ENCODE measurements at regions of chr14 and their contacts with region 1.

Region 1: DNA sequence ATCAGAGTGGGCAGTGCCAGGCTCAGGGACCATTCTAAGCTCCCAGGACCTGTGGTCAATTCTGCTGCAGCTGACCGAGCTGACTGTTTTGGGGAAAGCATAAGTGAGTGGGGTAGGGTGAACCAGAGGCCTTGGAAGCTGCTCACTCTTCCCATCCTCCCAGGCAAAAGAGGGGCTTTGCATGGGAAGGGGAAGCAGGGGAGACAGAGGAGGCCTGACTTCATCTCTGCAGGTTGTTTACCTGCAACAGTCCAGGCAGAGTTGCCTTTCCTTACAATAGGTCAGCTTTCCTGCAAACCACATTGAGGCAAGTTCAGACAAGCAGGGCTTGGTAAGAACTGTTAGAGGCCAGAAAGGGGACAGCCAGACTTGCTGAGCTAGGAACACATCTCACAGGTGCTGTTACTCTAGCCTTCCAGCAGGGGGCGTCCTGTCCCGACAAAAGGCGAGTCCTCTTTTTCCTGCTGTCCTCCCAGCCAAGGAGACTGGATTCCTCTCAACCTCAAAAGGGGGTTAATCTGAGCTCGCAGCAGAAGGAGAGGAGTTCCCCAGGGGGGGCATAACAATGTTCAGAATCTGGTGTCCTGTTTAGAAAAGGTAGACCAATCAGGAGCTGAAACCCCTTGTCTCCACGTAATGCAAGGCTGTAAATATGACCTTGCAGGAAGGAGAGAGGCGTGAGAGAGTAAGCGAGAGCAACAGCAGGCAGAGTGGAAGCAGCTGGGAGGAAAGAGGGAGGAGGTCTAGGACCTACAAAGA is 4.3 kb upstream of the DHRS2 start:
- DNase-seq: peak; percentile 74 to 85
- ATAC-seq: peak; percentile 77 to 92 (median 91)
- H3K4me3 ChIP-seq: no peak overlapping the region
- H3K4me3 Mint-ChIP-seq: peak overlapping the region; percentile 79
- H3K27ac ChIP-seq: no peak overlapping the region
- H3K27ac Mint-ChIP-seq: peak overlapping the region; percentile 3 to 34
- H3K4me1 ChIP-seq: peaks cover 6% of the 10 kb centered on the region
- H3K4me1 Mint-ChIP-seq: peaks cover 7 to 13% of the 10 kb centered on the region in 2 donors
- H3K27me3 ChIP-seq: no peaks in the 10 kb centered on the region
- H3K27me3 Mint-ChIP-seq: peaks cover 0 to 5% of the 10 kb centered on the region in 2 donors
- CTCF ChIP-seq: peak; percentile 96

Region 2: GRCh38 chr14:23929822-23930294 is 298.0 kb after region 1 on chr14:
- intact Hi-C with region 1: loop called (anchors 1 kb)
- DNase-seq: peak; percentile 75 to 91
- ATAC-seq: peak; percentile 87 to 100 (median 97)
- H3K4me3 ChIP-seq: no peak overlapping the region
- H3K4me3 Mint-ChIP-seq: no peak overlapping the region
- H3K27ac ChIP-seq: no peak overlapping the region
- H3K27ac Mint-ChIP-seq: no peak overlapping the region
- H3K4me1 ChIP-seq: no peaks in the 10 kb centered on the region
- H3K4me1 Mint-ChIP-seq: no peaks in the 10 kb centered on the region
- H3K27me3 ChIP-seq: no peaks in the 10 kb centered on the region
- H3K27me3 Mint-ChIP-seq: peaks cover 0 to 3% of the 10 kb centered on the region in 2 donors
- CTCF ChIP-seq: peak; percentile 95

Region 3: DNA sequence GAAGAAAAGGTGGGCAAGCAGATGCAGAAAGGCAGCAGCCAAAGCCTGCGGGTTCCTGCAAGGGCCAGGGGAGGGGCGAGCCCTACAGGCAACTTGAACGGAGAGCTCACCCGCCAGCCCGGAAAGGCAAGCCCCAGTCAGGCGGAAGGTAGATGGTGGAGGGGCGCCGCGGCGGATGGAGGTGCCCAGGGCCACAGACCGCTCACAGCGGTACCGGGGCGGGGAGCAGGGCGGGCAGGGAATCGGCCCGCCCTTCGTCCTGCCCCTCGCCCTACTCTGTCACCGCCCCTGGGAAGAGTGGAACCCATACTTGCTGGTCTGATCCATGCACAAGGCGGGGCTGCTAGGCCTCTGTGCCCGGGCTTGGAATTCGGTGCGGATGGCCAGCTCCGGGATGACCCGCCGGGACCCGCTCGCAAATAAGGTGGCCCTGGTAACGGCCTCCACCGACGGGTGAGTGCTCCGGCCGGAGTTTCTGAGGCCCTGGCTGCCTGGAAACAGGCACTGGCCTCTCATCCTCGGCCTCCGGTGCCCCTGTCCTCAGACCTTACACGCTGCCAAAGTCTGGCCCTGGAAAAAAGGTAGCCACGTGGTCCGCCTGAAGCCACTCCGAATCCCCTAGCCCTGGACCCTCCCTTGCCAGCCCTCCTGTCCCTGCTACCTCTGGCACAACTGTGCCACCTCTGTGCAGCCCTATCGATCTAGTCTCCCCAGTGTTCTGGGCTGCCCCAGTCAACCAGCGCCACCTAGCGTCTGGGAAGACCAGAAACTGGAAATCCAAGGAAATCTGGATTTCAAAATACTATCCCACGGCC is 321.8 kb after region 1 on chr14 and contains the start of gene DHRS4:
- intact Hi-C with region 1: loop called (anchors 1 kb)
- DNase-seq: peak; percentile 67 to 91
- ATAC-seq: peak; percentile 88 to 94 (median 89)
- H3K4me3 ChIP-seq: peak within 1 kb of the TSS; percentile 66
- H3K4me3 Mint-ChIP-seq: peak within 1 kb of the TSS; percentile 92
- H3K27ac ChIP-seq: peak within 1 kb of the TSS; percentile 61
- H3K27ac Mint-ChIP-seq: peak within 1 kb of the TSS; percentile 85 to 95
- H3K4me1 ChIP-seq: peaks cover 21% of the 10 kb centered on the region
- H3K4me1 Mint-ChIP-seq: peaks cover 25 to 31% of the 10 kb centered on the region in 2 donors
- H3K27me3 ChIP-seq: no peaks in the 10 kb centered on the region
- H3K27me3 Mint-ChIP-seq: no peaks in the 10 kb centered on the region
- CTCF ChIP-seq: peak; percentile 78
- total RNA-seq, gene DHRS4: 7.5 to 10.1 (median 9.9) TPM

Measured in natural killer cell (primary cell).